ENCODE measurements at regions of chr7 and their contacts with region 1.

Region 1: GRCh38 chr7:6614953-6615722 is at the start of gene ZNF853:
- DNase-seq: peak in 6 of 35 experiments; percentile 15 to 34 (median 22)
- ATAC-seq: peak; percentile 47 to 68 (median 64)
- H3K4me3 ChIP-seq: peak within 1 kb of the TSS; percentile 54 to 67
- H3K4me3 Mint-ChIP-seq: peak within 1 kb of the TSS; percentile 73 to 86 (median 82)
- H3K27ac ChIP-seq: no peak within 1 kb of the TSS
- H3K27ac Mint-ChIP-seq: peak within 1 kb of the TSS; percentile 35 to 72
- H3K4me1 ChIP-seq: peaks cover 11 to 37% of the 10 kb centered on the region in 2 experiments
- H3K4me1 Mint-ChIP-seq: peaks cover 26 to 34% (median 27%) of the 10 kb centered on the region in 3 donors
- H3K27me3 ChIP-seq: peaks cover 0 to 29% of the 10 kb centered on the region in 2 experiments
- H3K27me3 Mint-ChIP-seq: peaks cover 0 to 6% of the 10 kb centered on the region in 2 donors
- total RNA-seq, gene ZNF853: 3.6 to 7.6 (median 5.6) TPM

Region 2: DNA sequence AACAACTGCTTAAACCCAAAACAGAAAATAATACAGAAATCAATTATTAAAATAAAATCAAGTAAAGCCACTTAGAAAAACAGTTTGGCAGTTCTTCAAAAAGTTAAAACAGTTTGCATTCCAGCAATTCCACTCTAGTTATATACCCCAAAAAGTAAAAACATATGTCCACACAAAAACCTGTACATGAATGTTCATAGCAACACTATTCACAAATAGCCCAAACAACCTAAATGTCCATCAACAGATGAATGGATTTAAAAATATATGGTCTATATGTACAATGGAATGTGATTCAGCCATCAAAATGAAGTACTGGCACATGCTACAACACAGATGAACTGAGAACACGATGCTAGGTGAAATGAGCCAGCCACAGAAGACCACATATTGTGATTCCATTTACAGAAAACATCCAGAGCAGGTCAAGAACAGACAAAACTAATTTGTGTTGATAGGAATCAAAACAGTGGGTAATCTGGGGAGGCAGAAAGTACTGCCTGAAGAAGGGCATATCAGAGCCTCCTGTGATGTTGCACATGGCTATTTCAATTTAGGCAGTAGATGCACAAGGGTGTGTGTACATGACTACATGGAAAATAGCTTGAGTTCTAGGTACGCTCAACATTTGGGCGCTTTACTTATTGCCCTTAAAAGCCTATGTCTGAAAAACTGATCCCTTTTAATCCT is 409.0 kb before region 1 on chr7:
- CTCF ChIA-PET with region 1: no interaction called
- POLR2A ChIA-PET with region 1: no interaction called
- DNase-seq: no peak
- ATAC-seq: no peak
- H3K4me3 ChIP-seq: no peak overlapping the region
- H3K4me3 Mint-ChIP-seq: no peak overlapping the region
- H3K27ac ChIP-seq: no peak overlapping the region
- H3K27ac Mint-ChIP-seq: no peak overlapping the region
- H3K4me1 ChIP-seq: no peaks in the 10 kb centered on the region
- H3K4me1 Mint-ChIP-seq: peaks cover 0 to 2% (median 0%) of the 10 kb centered on the region in 3 donors
- H3K27me3 ChIP-seq: no peaks in the 10 kb centered on the region
- H3K27me3 Mint-ChIP-seq: no peaks in the 10 kb centered on the region

Region 3: DNA sequence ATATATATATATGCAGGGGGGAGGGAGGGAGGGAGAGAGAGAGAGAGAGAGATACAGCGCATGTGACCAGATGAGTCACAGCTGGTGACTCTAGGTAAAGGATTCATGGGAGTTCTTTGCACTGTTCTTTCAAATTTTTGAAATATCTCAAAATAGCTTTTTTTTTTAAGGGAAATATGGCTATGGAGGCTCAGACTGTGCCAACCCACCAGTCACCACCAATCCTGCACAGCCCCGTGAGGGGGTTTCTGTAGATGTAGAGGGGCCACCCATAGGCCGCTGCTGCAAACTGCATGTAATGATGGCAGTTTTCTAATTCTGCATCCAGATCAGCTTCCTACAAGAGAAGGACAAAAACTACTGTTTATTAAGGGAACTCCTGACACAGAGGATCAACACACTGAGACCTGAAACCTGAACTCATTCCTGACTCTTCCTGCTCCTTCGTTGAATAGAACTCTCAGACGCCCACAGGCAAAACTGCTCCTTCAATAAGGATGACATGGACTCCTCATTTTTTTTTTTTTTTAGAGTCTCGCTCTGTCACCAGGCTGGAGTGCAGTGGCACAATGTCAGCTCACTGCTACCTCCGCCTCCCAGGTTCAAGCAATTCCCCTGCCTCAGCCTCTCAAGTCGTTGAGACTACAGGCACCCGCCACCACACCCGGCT is 184.7 kb before region 1 on chr7:
- CTCF ChIA-PET with region 1: no interaction called
- POLR2A ChIA-PET with region 1: no interaction called
- DNase-seq: no peak
- ATAC-seq: no peak
- H3K4me3 ChIP-seq: no peak overlapping the region
- H3K4me3 Mint-ChIP-seq: no peak overlapping the region
- H3K27ac ChIP-seq: no peak overlapping the region
- H3K27ac Mint-ChIP-seq: no peak overlapping the region
- H3K4me1 ChIP-seq: peaks cover under 1 to 3% of the 10 kb centered on the region in 2 experiments
- H3K4me1 Mint-ChIP-seq: peaks cover under 1 to 7% (median 2%) of the 10 kb centered on the region in 3 donors
- H3K27me3 ChIP-seq: no peaks in the 10 kb centered on the region
- H3K27me3 Mint-ChIP-seq: no peaks in the 10 kb centered on the region

Region 4: DNA sequence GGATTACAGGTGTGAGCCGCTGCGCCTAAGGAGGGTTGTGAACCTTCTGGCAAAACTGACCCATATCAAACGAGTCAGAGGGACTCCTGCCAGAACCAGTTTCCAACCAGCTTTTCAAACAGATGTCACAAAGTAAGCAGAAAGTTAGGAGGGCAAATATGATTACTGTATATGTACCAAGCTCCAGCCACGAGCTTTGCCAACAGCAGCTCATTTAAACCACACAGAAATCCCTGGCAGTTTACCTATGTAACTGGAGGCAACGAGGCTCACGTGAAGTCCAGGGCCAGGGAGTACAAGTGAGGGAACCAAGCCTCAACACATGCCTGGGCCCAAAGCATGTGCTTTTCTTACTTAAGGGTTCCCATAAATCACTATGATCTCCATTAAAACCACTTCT is 154.8 kb before region 1 on chr7:
- CTCF ChIA-PET with region 1: no interaction called
- POLR2A ChIA-PET with region 1: no interaction called
- DNase-seq: no peak
- ATAC-seq: no peak
- H3K4me3 ChIP-seq: no peak overlapping the region
- H3K4me3 Mint-ChIP-seq: no peak overlapping the region
- H3K27ac ChIP-seq: no peak overlapping the region
- H3K27ac Mint-ChIP-seq: no peak overlapping the region
- H3K4me1 ChIP-seq: no peaks in the 10 kb centered on the region
- H3K4me1 Mint-ChIP-seq: peaks cover 0 to 2% (median 0%) of the 10 kb centered on the region in 3 donors
- H3K27me3 ChIP-seq: no peaks in the 10 kb centered on the region
- H3K27me3 Mint-ChIP-seq: no peaks in the 10 kb centered on the region

Region 5: DNA sequence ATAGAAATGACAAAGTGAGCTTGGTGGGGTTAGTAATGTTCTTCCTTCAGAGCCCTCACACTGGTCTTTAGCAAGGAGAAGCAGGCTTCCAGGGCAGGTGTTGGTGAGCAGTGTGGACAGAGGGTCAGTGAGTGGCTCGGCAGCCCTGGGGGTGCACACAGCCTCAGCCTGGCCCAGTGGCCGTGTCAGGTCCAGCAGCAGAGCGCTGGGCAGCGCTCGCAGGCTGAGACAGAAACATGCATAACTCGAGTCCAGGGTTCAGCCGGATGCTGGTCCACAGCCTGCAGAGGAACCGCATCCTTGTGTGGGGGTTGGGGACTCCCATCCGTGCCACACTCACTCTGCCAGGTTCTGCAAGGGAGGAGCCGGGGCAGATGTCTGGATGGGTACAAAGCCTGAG is 10.7 kb before region 1 on chr7:
- CTCF ChIA-PET with region 1: no interaction called
- POLR2A ChIA-PET with region 1: no interaction called
- DNase-seq: no peak
- ATAC-seq: no peak
- H3K4me3 ChIP-seq: no peak overlapping the region
- H3K4me3 Mint-ChIP-seq: no peak overlapping the region
- H3K27ac ChIP-seq: no peak overlapping the region
- H3K27ac Mint-ChIP-seq: no peak overlapping the region
- H3K4me1 ChIP-seq: peaks cover 0 to 9% of the 10 kb centered on the region in 2 experiments
- H3K4me1 Mint-ChIP-seq: peaks cover 2 to 17% (median 7%) of the 10 kb centered on the region in 3 donors
- H3K27me3 ChIP-seq: no peaks in the 10 kb centered on the region
- H3K27me3 Mint-ChIP-seq: no peaks in the 10 kb centered on the region

Region 6: DNA sequence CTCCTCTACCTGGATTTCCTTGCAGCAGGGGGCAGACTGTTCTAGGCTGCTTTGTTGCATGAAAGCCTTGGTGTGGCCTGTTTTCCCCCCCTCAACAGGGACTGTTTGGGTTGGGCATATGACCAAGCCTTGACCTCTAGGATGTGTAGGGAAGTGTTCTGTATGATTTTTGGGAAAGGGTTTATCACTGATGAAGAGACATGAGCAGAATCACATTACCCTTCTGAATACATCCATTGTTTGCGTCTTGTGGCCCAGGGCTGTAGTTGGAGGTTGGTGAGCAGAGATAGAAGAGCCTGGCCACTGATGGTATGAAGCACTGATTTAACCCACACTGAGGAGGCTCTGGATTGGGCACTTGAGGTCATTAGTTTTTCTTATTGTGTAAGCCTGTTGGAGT is 65.0 kb after region 1 on chr7:
- CTCF ChIA-PET with region 1: no interaction called
- POLR2A ChIA-PET with region 1: interaction called in 1 of 2 experiments, 13 read pairs
- DNase-seq: no peak
- ATAC-seq: no peak
- H3K4me3 ChIP-seq: no peak overlapping the region
- H3K4me3 Mint-ChIP-seq: no peak overlapping the region
- H3K27ac ChIP-seq: no peak overlapping the region
- H3K27ac Mint-ChIP-seq: no peak overlapping the region
- H3K4me1 ChIP-seq: no peaks in the 10 kb centered on the region
- H3K4me1 Mint-ChIP-seq: no peaks in the 10 kb centered on the region
- H3K27me3 ChIP-seq: no peaks in the 10 kb centered on the region
- H3K27me3 Mint-ChIP-seq: no peaks in the 10 kb centered on the region

Measured in T-cell (primary cell).